Breast epithelium (tissue), 4 donors: ENCODE measurements at regions of chr1 and their contacts with region 1.

Region 1: GRCh38 chr1:17587989-17588685 is 48.6 kb downstream of the ARHGEF10L start:
- DNase-seq: peak; percentile 62 to 65
- H3K4me3 ChIP-seq: peak overlapping the region in 1 of 3 donors; percentile 39
- H3K27ac ChIP-seq: peak overlapping the region; percentile 87 to 94
- H3K4me1 ChIP-seq: peaks cover 0 to 9% of the 10 kb centered on the region in 2 donors
- H3K27me3 ChIP-seq: no peaks in the 10 kb centered on the region
- CTCF ChIP-seq: no peak
- POLR2A ChIP-seq: no peak

Region 2: DNA sequence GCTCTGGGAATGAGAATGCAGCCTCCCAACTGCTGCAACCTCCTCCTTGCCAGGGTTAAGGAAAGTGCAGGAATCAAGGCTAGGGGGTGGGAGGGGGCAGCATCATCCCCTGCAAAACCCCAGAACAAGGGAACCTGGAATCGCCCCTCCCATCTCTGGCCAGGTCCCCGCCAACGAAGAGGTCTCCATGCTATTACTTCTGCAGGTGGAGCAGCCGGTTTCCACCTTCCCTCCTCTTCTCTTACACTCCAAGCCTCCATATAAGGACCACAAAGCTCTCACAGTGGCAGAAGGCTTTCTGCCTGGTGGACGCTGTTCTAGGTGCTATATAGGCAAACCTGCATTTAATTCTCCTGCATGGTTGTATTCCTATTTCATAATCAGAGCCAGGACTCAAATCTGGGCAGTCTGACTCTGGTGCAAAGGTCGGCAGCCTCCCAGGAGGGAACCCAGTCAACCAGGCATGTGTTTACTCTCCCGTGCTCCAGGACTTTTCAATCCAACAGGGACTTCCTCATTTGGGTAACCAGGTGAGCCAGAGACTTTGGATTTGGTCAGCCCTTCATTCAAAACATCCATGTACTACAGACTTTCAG is 71.4 kb before region 1 on chr1:
- intact Hi-C with region 1: loop called (anchors 1 kb)
- DNase-seq: no peak
- H3K4me3 ChIP-seq: no peak overlapping the region
- H3K27ac ChIP-seq: peak overlapping the region in 1 of 2 donors; percentile 17
- H3K4me1 ChIP-seq: no peaks in the 10 kb centered on the region
- H3K27me3 ChIP-seq: no peaks in the 10 kb centered on the region
- CTCF ChIP-seq: no peak
- POLR2A ChIP-seq: no peak